ENCODE measurements at regions of chr6 and their contacts with region 1.

Region 1: DNA sequence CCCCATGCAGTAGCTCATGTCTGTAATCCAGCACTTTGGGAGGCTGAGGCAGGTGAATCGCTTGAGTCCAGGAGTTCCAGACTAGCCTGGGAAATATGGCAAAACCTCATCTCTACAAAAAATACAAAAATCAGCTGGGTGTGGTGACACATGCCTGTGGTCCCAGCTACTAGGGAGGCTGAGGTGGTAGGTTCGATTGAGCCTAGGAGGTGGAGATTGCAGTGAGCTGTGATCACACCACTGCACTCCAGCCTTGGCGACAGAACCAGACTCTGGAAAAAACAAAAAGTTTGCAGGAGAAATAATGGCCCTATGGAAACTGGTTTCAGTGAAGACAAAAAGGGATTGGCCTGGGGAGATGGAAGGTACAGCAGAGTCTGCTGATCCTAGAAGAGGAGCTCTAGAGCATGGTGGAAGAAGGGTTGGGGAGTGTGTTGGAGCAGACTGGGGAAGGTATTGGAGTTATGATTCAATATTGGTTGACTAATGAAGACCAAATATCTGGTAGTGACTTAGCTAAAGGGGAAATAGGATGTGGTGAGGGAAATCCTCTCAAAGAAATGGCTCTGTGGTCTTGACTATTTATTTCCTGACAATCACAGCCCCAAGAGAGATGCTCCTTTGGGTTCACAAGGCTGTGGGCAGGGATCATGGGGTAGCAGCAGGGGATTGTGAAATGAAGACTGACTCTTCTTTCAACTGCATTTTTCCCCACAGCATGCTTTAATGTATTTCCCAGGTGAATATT is 281.9 kb downstream of the UTRN start:
- DNase-seq: no peak
- ATAC-seq: peak; percentile 77
- H3K4me3 Mint-ChIP-seq: no peak overlapping the region
- H3K27ac Mint-ChIP-seq: no peak overlapping the region
- H3K4me1 Mint-ChIP-seq: peaks cover 5% of the 10 kb centered on the region
- H3K27me3 Mint-ChIP-seq: no peaks in the 10 kb centered on the region

Region 2: GRCh38 chr6:144582939-144583613 is 16.0 kb after region 1 on chr6:
- POLR2A ChIA-PET with region 1: interaction called, 10 read pairs
- DNase-seq: peak; percentile 69
- ATAC-seq: peak; percentile 87
- H3K4me3 Mint-ChIP-seq: peak overlapping the region; percentile 86
- H3K27ac Mint-ChIP-seq: peak overlapping the region; percentile 93
- H3K4me1 Mint-ChIP-seq: peaks cover 42% of the 10 kb centered on the region
- H3K27me3 Mint-ChIP-seq: no peaks in the 10 kb centered on the region

Region 3: DNA sequence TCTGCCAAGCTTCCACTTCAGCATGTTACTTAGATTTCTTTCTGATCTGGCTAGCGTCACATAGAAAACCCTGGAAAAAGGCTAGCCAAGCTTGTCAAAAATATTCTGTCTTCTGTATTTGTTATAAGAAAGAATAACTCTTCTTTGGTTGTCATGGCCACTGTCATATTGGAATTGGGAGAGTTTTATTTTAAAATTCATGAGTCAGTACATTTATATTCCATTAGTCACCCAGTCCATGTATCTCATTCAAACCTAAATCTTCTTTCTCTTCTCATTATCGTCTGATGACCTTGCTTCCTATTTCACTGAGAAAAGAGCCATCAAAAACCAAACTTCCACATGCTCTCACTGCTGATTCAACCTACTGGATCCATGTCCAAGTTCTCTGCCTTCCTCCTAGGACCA is 1102.6 kb after region 1 on chr6:
- POLR2A ChIA-PET with region 1: no interaction called
- DNase-seq: no peak
- ATAC-seq: no peak
- H3K4me3 Mint-ChIP-seq: no peak overlapping the region
- H3K27ac Mint-ChIP-seq: no peak overlapping the region
- H3K4me1 Mint-ChIP-seq: peaks cover under 1% of the 10 kb centered on the region
- H3K27me3 Mint-ChIP-seq: no peaks in the 10 kb centered on the region